AG04450 (cell line): ENCODE measurements at regions of chr4 and their contacts with region 1.

Region 1: DNA sequence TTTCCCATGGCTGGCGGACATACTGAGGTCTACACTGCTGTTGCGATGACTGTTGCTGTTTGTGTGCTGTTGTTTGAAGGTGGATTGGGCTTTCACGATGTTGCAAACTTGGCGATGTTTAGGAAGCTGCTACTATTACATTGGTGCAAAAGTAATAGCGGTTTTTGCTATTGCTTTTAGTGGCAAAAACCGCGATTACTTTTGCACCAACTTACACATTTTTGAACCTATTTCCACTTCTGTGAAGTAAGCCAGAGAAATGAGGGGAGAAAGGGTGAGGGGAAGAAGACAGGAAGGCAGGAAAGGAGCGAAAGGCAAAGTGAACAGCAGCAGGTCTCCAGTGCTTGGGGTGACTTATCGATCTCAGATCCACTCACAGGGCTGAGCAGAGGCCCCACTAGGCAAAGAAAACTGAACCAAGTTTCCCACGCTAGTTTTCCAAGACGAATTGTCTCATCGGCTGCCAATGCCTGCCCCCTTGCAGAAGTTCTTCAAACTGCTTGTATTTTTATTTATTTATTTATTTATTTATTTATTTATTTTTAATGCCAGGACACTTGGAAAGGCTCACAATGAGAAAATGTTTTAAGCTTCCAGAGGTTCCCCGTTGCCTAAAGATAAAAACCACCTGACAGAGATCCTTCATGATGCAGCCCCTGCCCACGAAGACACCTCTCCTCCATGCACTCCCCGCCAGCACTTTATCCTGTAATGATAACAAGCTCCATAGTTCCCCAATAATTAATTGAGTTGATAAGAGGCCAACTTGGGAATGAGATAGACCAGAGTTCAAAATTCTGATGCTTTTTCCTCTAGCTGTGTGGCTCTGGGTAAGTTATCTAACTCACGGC is 43.3 kb downstream of the QDPR start:
- DNase-seq: no peak
- H3K4me3 ChIP-seq: no peak overlapping the region
- H3K27ac ChIP-seq: no peak overlapping the region
- H3K27me3 ChIP-seq: no peaks in the 10 kb centered on the region
- CTCF ChIP-seq: peak; percentile 67

Region 2: DNA sequence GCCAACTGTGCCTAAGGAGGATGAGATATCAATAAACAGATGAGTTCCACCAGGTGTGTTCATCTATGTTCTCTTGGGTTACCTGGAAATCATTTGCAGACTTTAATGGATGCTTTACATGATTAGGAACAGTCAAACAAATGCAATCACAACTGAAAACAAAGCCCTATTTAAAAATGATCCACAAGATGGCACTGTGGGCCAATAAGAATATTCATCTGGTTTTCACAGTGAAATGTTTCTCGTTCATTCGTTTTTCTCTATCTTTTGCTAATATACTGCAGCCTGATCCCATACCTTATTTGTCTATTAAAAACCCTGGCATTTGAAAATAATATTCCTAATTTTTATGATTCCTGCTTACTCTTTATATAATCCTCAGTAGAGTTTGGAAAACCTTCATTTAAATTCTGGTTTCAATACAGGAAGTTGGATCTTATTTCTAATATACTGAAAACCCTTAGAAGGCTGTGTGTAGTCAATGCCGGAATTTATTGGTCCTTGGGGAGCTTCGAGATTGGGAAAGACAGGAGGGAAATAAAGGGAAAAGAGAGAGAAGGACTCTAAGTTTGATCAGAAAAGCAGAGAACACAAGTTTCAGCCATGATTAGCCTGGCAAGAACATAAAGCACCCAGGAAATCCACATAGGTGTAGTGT is 1178.6 kb before region 1 on chr4:
- CTCF ChIA-PET with region 1: interaction called, 133 read pairs
- POLR2A ChIA-PET with region 1: no interaction called
- DNase-seq: no peak
- H3K4me3 ChIP-seq: no peak overlapping the region; the same call in 1 of the 2 replicates
- H3K27ac ChIP-seq: no peak overlapping the region
- H3K27me3 ChIP-seq: peaks cover 9% of the 10 kb centered on the region
- CTCF ChIP-seq: peak; percentile 65

Region 3: GRCh38 chr4:17251101-17251500 is 217.5 kb before region 1 on chr4:
- CTCF ChIA-PET with region 1: no interaction called
- POLR2A ChIA-PET with region 1: no interaction called
- DNase-seq: no peak
- H3K4me3 ChIP-seq: no peak overlapping the region
- H3K27ac ChIP-seq: no peak overlapping the region
- H3K27me3 ChIP-seq: no peaks in the 10 kb centered on the region
- CTCF ChIP-seq: no peak

Region 4: GRCh38 chr4:17347445-17347844 is 121.2 kb before region 1 on chr4:
- CTCF ChIA-PET with region 1: interaction called, 107 read pairs
- POLR2A ChIA-PET with region 1: no interaction called
- DNase-seq: no peak
- H3K4me3 ChIP-seq: no peak overlapping the region
- H3K27ac ChIP-seq: no peak overlapping the region
- H3K27me3 ChIP-seq: no peaks in the 10 kb centered on the region
- CTCF ChIP-seq: peak; percentile 68

Region 5: DNA sequence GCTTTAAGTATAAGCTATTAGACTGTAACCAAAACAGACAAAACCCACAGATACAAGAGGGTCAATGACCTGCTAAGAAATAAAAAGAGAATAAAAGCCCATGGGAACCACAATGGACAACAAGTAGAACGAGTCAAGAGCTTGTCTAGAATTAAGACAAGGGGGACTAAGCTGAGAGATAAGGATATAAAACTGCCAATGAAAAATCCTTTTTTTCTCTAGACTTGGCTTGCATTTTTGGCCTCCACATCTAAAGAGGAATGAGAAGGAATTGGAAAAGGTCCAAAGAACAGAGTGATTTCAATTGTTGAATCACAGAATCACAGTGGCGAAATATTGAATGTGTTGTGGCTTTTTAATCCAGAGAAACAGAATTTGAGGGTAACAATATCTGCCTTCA is 92.4 kb before region 1 on chr4:
- CTCF ChIA-PET with region 1: no interaction called
- POLR2A ChIA-PET with region 1: no interaction called
- DNase-seq: no peak
- H3K4me3 ChIP-seq: no peak overlapping the region
- H3K27ac ChIP-seq: no peak overlapping the region
- H3K27me3 ChIP-seq: peaks cover 3% of the 10 kb centered on the region
- CTCF ChIP-seq: no peak